ENCODE measurements at regions of chr1 and their contacts with region 1.

Region 1: GRCh38 chr1:173190101-173190906 is 16.8 kb downstream of the TNFSF4 start:
- DNase-seq: peak; percentile 80
- H3K4me3 ChIP-seq: no peak overlapping the region
- H3K27ac ChIP-seq: no peak overlapping the region
- H3K4me1 ChIP-seq: peaks cover 5% of the 10 kb centered on the region
- H3K27me3 ChIP-seq: no peaks in the 10 kb centered on the region
- CTCF ChIP-seq: no peak

Region 2: DNA sequence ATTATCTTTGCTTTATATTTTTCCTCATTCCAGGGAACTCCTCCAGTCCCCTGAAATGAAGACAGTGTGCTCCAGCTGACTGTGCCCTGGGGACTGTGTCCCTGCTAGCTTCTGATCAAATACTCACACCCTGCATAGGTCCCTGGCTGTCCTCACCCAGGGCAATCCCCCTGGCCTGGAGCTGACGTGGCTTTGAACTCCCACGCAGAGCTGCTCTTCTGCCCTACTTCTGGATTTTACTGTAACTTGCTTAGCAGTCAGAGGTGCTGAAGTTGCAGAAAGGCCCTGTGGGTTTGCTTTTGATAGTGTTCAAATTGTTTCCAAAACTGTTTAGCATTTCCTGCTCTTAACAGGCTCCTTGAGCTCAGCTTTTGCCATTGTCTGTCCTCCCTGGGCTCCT is 344.9 kb before region 1 on chr1:
- intact Hi-C with region 1: no loop called
- DNase-seq: no peak
- H3K4me3 ChIP-seq: no peak overlapping the region
- H3K27ac ChIP-seq: no peak overlapping the region
- H3K4me1 ChIP-seq: no peaks in the 10 kb centered on the region
- H3K27me3 ChIP-seq: no peaks in the 10 kb centered on the region
- CTCF ChIP-seq: no peak

Region 3: DNA sequence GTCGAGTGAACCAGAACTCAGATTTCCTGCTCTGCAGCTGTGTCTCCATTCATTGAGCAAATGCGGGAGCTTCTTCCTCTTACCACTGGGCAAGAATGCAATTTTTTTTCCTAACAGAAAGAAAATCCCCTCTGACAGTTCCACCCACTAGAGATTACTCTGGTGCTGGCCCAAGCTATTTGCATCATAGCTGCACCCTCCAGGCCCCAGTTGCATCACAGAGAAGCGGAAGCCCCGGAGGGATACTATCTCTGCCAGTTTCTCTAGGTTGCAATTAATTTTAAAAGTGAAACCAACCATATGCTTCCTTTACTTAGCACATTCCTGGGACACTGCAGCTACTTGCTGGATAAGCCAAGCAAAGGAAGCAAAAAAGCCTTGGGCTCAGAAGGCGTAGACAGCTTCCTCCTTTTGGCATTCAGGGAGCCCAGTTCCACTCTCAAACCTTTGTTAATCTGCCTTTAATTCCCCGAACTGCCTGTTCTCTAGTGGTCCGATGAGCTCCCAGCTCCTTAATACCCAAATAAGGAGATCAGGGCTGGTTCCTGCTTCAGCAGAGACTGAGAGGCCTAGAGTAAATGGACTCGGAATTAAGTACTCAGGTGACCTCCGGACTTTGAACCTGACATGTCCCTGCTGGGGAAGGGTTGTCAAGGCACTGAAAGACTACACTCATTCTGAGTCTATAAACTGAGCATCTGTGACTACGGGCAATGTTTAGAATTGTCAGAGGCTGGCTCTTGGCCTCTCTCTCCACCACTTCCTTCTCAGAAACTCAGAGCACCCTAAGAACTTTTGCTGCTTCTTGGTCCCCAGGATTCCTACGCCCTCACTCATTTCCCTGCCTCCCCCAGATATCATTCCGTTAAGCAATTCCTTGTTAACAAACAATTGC is 67.1 kb before region 1 on chr1:
- intact Hi-C with region 1: loop called (anchors 10 kb)
- DNase-seq: peak; percentile 73
- H3K4me3 ChIP-seq: no peak overlapping the region
- H3K27ac ChIP-seq: peak overlapping the region; percentile 68
- H3K4me1 ChIP-seq: peaks cover 8% of the 10 kb centered on the region
- H3K27me3 ChIP-seq: no peaks in the 10 kb centered on the region
- CTCF ChIP-seq: no peak

Measured in colonic mucosa (tissue), 4 donors.